HEK293T (cell line): ENCODE measurements at regions of chr12 and their contacts with region 1.

Region 1: GRCh38 chr12:10212201-10213131 is at the start of gene GABARAPL1:
- DNase-seq: peak; percentile 92

Region 2: DNA sequence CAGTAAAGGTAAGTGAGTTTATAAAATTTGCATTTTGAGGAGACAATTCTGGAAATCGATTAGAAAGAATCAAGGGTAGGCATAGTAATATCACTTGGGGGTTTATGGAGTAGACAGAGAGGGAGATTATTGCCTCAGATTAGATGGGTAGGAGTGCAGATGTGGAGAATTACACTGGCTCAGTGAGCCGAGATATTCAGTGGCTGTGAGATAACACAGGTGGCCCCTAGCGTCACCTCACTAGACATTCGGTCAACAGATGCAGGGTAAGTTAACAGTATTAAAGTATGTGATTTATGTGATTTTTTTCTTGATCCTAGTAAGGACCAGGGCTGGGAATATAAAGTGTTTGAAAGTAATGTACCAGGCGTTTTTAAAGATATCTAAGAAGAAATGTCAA is 55.6 kb after region 1 on chr12:
- CTCF ChIA-PET with region 1: no interaction called
- POLR2A ChIA-PET with region 1: no interaction called
- DNase-seq: no peak

Region 3: DNA sequence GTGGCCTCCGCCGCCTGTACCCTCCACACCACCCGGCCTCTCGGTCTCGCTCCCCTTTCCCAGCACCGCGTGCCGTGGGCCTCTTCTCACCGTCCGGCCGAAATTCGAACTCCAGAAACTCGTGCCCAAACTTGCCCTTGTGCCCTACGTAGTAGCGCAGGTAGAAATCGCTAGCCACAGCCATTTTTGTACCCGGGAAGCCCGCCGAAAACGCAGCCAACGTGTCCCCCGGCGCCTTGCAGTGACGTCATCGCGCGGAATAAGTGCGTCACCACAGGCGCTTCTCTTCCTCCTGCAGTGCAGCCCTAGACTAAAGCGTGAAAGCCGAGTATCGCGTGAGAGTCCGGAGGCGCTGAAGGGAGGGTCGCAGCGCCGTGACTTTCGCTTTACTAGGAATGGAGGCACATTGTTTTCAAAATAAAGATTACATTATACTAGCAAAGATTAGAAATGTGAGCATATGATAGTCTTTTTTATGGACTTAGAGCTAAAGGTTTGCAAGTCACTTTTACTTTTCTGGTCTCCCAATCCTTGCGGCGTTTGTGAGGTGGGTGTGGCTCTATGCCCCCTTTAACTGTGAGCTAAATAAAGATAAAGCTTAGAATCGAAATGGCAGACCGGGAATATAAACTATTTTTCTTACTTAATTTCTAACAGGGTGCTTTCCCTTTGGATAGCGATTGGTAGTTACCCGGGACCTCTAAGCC is 401.0 kb after region 1 on chr12 and contains the start of gene MAGOHB:
- CTCF ChIA-PET with region 1: no interaction called
- POLR2A ChIA-PET with region 1: interaction called, 12 read pairs
- DNase-seq: peak; percentile 96